CD8-positive, alpha-beta T cell (primary cell): ENCODE measurements at regions of chr20 and their contacts with region 1.

Region 1: DNA sequence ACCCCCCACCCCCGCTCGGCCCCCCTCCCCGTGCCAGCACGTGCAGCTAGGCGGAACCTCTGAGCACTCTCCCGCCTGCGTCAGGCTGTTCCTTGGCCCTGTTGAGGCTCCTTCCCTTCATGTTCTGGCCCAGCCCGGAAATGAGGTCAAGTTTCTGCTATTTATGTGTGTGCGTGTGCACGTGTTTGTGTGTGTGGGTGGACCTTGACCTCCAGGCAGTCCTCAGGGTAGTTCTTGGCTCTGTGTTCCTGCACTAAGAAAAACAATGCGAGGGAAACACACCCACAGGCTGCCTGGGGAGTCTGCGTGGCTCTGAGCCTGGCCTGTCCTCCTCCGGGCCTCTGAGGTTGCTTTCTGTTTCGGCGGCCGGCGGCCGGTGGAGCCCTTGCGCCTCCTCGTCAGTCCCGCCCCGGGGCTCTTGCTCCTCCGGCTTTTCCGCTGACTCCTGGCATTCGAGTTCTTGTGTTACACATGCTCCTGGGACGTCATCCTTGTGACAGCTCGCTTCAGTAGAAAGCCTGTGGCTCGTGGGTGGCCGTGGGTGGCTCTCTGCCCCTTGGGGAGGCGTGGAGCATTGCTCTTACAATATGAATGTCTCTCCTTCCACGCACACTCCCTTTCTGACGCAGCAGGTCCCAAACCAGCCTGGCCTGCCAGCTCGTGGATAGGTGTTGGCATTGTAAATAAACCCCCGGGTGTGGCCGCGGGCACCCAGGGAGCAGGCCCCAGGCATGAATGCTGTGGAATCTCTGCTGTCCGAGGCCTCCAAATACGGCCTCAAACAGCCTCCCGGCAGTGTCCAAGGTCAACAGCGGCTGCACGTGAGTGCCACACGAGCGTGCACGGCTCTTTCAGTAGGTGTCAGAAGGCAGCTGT is 10.0 kb downstream of the SLCO4A1 start:
- DNase-seq: peak; percentile 44 to 88 (median 75)
- ATAC-seq: peak; percentile 59
- H3K4me3 ChIP-seq: peak overlapping the region; percentile 29 to 35
- H3K4me3 Mint-ChIP-seq: peak overlapping the region; percentile 80
- H3K27ac ChIP-seq: peak overlapping the region; percentile 82 to 83
- H3K27ac Mint-ChIP-seq: peak overlapping the region; percentile 97
- H3K4me1 ChIP-seq: peaks cover 24% of the 10 kb centered on the region
- H3K4me1 Mint-ChIP-seq: peaks cover 31% of the 10 kb centered on the region
- H3K27me3 ChIP-seq: no peaks in the 10 kb centered on the region
- H3K27me3 Mint-ChIP-seq: no peaks in the 10 kb centered on the region
- CTCF ChIP-seq: no peak

Region 2: DNA sequence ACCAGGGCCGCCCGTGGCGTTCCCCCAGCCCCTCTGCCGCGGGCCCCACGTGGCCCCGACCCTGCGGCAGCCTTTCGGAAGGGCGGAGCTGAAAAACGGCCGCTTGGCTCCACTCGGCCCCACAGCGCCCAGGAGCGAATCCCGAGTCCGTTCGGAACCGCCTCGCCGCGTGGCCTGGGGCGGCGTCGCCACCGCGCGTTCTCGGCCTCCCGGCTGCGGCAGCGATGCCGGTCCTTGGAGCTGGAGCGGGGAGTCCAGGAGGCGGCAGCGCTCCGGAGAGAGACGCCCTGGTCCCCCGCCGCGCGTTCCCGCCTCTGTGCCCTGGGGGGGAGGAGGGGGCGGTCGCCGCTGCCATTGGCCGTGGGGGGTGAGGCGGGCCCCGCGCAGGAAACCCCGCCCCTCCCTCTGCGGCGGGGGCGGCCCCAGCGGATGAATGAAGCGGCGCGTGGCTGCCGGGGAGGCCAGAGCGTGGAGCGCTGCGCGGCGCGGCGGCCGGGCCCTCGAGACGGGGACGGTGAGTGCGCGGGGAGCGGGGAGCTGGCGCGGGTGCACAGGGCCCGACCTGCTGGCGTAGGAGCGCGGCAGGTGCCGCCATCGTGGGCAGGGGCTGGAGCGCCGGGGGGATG is 10.1 kb before region 1 on chr20 and contains the start of gene SLCO4A1:
- CTCF ChIA-PET with region 1: interaction called, 3 read pairs
- POLR2A ChIA-PET with region 1: interaction called, 21 read pairs
- intact Hi-C with region 1: loop called (anchors 1 kb)
- DNase-seq: peak; percentile 57 to 90 (median 80)
- ATAC-seq: peak; percentile 92
- H3K4me3 ChIP-seq: peak within 1 kb of the TSS; percentile 34 to 59
- H3K4me3 Mint-ChIP-seq: peak within 1 kb of the TSS; percentile 85
- H3K27ac ChIP-seq: no peak within 1 kb of the TSS
- H3K27ac Mint-ChIP-seq: no peak within 1 kb of the TSS
- H3K4me1 ChIP-seq: peaks cover 21% of the 10 kb centered on the region
- H3K4me1 Mint-ChIP-seq: peaks cover 7% of the 10 kb centered on the region
- H3K27me3 ChIP-seq: no peaks in the 10 kb centered on the region
- H3K27me3 Mint-ChIP-seq: peaks cover 2% of the 10 kb centered on the region
- CTCF ChIP-seq: no peak
- total RNA-seq, gene SLCO4A1: 4.5 to 4.7 TPM

Region 3: GRCh38 chr20:62995898-62996595 is 343.8 kb after region 1 on chr20:
- CTCF ChIA-PET with region 1: no interaction called
- POLR2A ChIA-PET with region 1: no interaction called
- intact Hi-C with region 1: no loop called
- DNase-seq: no peak
- ATAC-seq: no peak
- H3K4me3 ChIP-seq: no peak overlapping the region
- H3K4me3 Mint-ChIP-seq: no peak overlapping the region
- H3K27ac ChIP-seq: no peak overlapping the region
- H3K27ac Mint-ChIP-seq: no peak overlapping the region
- H3K4me1 ChIP-seq: no peaks in the 10 kb centered on the region
- H3K4me1 Mint-ChIP-seq: peaks cover 2% of the 10 kb centered on the region
- H3K27me3 ChIP-seq: peaks cover 0 to 3% of the 10 kb centered on the region in 2 experiments
- H3K27me3 Mint-ChIP-seq: peaks cover 26% of the 10 kb centered on the region
- CTCF ChIP-seq: no peak